Dendritic cell treated with granulocyte-macrophage colony-stimulating factor and Interleukin-4, amounts not matched to agents 40 ng/mL and 50 ng/mL, for 4 days (primary cell): ENCODE measurements at regions of chr15 and their contacts with region 1.

Region 1: GRCh38 chr15:34101366-34102175 is at the starts of genes EMC7 and PGBD4:
- H3K4me3 Mint-ChIP-seq: peak within 1 kb of the TSS; percentile 99
- H3K27ac Mint-ChIP-seq: peak within 1 kb of the TSS; percentile 99
- H3K4me1 Mint-ChIP-seq: peaks cover 11% of the 10 kb centered on the region
- H3K27me3 Mint-ChIP-seq: no peaks in the 10 kb centered on the region

Region 2: DNA sequence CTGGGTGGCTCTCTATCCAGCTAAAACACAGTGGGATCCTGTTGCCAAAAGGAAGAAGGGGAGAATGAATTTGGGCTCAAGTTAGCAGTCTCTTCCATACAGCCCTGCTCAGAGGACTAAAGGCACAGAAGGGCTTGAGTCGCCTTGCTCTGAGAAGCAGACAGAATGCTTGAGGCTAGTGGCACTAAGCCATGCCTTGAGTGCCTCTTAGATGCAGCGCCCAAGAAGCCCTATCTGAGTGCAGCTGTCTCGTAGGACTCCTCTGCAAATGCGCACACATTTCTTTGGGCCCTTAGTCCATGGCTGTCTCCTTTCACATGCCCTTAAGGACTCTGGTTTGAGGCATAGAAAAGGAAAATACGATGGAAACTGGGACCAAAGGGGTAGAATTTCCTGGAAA is 344.6 kb before region 1 on chr15:
- intact Hi-C with region 1: no loop called
- H3K4me3 Mint-ChIP-seq: no peak overlapping the region
- H3K27ac Mint-ChIP-seq: no peak overlapping the region
- H3K4me1 Mint-ChIP-seq: peaks cover 18% of the 10 kb centered on the region
- H3K27me3 Mint-ChIP-seq: peaks cover 5% of the 10 kb centered on the region

Region 3: GRCh38 chr15:34001536-34001935 is 100.0 kb before region 1 on chr15:
- intact Hi-C with region 1: no loop called
- H3K4me3 Mint-ChIP-seq: no peak overlapping the region
- H3K27ac Mint-ChIP-seq: no peak overlapping the region
- H3K4me1 Mint-ChIP-seq: no peaks in the 10 kb centered on the region
- H3K27me3 Mint-ChIP-seq: no peaks in the 10 kb centered on the region

Region 4: GRCh38 chr15:34038023-34038870 is 63.3 kb before region 1 on chr15:
- intact Hi-C with region 1: loop called (anchors 2 kb)
- H3K4me3 Mint-ChIP-seq: peak overlapping the region; percentile 86
- H3K27ac Mint-ChIP-seq: peak overlapping the region; percentile 83
- H3K4me1 Mint-ChIP-seq: peaks cover 16% of the 10 kb centered on the region
- H3K27me3 Mint-ChIP-seq: no peaks in the 10 kb centered on the region

Region 5: DNA sequence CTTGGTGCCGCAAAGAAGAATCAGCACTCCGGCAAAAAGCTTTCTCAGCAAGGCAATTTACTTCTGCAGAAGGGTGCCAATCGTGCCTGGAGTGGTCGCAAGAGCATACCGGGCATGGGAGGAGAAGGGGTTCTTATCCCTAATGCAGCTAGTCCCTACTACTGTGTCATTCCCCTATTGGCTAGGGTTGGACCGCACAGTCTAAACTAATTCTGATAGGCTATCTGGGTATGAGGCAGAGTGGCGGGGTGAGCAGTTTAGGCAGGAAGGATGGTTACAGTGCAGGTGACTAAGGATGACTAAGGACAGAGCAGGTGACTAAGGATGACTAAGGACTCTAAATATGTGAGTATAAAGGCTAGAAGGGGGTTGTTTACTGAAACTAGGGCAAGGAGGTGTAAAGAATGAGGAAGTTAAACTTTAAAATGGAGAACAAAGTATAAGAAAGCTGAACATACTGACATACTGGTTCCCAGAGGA is 53.2 kb after region 1 on chr15:
- intact Hi-C with region 1: no loop called
- H3K4me3 Mint-ChIP-seq: no peak overlapping the region
- H3K27ac Mint-ChIP-seq: no peak overlapping the region
- H3K4me1 Mint-ChIP-seq: peaks cover 9% of the 10 kb centered on the region
- H3K27me3 Mint-ChIP-seq: no peaks in the 10 kb centered on the region

Region 6: DNA sequence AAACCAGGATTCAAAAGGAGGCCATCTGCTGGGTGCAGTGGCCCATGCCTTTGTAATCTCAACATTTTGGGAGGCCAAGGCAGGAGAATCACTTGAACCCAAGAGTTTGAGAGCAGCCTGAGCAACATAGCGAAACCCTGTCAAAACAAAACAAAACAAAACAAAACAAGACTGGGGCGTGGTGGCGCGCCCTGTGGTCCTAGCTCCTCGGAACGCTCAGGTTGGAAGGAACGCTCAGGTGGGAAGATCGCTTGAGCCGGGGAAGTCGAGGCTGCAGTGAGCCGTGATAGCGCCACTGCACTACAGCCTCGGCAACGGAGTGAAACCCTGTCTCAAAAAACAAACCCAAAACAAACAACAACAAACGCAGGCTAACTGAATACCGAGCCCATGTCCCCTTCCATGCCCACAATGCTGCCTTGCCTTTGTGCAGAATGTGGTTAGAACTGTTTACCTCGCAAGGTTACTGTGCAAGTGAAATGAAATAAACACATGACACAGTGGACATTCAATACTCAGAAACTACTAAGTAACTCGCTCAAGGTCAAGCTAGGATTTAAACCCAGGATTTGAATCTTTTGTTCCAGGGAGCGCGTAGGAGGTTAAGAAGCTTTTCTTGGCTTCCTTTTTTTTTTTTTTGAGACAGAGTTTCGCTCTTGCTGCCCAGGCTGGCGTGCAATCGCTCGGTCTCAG is 122.5 kb after region 1 on chr15:
- intact Hi-C with region 1: loop called (anchors 1 kb)
- H3K4me3 Mint-ChIP-seq: peak overlapping the region; percentile 92
- H3K27ac Mint-ChIP-seq: peak overlapping the region; percentile 100
- H3K4me1 Mint-ChIP-seq: peaks cover 20% of the 10 kb centered on the region
- H3K27me3 Mint-ChIP-seq: no peaks in the 10 kb centered on the region